Motor neuron (in vitro differentiated cells): ENCODE measurements at regions of chr13 and their contacts with region 1.

Region 1: DNA sequence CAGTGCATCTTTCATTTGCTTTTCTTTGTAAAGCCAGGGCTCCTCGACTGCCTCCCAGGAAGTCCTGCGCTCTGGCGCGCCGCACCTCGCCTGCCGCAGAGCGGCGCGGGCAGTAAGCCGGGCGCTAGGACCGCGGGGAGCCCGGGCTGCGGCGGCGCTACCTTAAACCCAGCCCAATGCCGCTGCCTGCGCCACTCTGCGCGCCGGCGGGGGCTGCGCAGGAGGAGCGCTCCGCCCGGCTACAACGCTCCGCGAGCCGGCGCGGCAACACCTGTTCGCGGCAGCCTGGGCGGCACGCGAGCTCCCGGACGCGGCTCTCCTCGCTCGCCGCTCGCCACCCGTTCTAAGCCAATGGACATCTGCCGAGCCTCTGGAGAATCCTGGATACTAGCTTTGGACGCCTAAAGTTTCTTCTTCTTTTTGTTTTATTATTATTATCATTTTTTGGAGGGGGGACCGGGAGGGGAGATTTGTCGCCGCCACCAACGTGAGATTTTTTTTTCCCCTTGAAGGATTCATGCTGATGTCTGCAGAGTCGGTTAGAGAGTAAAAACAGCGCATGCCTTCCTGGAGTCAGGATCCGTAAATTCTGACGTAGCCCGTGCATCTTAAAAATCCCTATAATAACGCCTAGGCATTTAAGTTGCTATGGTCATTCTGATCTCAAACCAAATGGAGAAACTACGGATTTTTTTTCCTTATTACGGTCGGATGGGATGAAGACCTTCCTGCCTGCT is at the start of gene FGF9:
- ATAC-seq: peak; percentile 63 to 84 (median 70)
- H3K4me3 ChIP-seq: peak within 1 kb of the TSS; percentile 82 to 98 (median 85)
- H3K27ac ChIP-seq: peak within 1 kb of the TSS; percentile 81 to 84
- H3K4me1 ChIP-seq: peaks cover 8 to 11% of the 10 kb centered on the region in 2 donors
- total RNA-seq, gene FGF9: 0.36 to 12.8 (median 9.0) TPM in 6 of 8 experiments, not detected in the others

Region 2: DNA sequence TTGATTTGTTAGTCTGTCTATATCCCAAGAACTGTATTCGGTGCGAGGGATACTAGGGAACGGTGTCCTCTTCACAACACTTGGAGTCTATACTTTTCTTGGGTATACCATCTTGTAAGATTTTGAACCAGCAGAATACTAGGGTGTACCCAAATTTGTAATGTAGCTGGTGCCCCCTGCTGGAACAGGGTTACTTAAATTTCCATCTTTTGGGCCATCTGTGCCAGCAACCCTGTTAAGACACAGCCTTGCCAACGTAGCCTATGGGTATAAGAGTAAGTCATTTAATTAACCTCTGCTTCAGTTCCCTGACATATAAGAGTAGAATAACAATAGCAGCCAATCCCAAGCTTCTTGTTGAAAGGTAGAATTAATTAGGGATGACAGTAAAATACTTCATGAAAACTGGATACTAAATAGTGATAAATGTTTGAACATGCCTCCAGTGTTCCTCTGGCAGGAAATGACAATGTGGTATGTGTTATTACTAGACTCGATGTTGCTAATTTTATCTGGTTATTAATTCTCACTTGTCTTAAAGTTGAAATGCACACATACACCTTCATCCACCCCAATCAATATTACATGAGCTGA is 607.4 kb after region 1 on chr13:
- in situ Hi-C with region 1: loop called in 1 of 9 experiments (anchors 25 kb)
- ATAC-seq: peak in 1 of 8 experiments; percentile 38
- H3K4me3 ChIP-seq: no peak overlapping the region
- H3K27ac ChIP-seq: no peak overlapping the region
- H3K4me1 ChIP-seq: no peaks in the 10 kb centered on the region